Psoas muscle (tissue), 8 donors: ENCODE measurements at regions of chr1 and their contacts with region 1.

Region 1: GRCh38 chr1:214895011-214895600 is 187.4 kb upstream of the KCNK2 start:
- DNase-seq: no peak
- ATAC-seq: no peak
- H3K4me3 ChIP-seq: no peak overlapping the region
- H3K27ac ChIP-seq: no peak overlapping the region
- H3K4me1 ChIP-seq: no peaks in the 10 kb centered on the region
- H3K27me3 ChIP-seq: no peaks in the 10 kb centered on the region
- CTCF ChIP-seq: no peak

Region 2: DNA sequence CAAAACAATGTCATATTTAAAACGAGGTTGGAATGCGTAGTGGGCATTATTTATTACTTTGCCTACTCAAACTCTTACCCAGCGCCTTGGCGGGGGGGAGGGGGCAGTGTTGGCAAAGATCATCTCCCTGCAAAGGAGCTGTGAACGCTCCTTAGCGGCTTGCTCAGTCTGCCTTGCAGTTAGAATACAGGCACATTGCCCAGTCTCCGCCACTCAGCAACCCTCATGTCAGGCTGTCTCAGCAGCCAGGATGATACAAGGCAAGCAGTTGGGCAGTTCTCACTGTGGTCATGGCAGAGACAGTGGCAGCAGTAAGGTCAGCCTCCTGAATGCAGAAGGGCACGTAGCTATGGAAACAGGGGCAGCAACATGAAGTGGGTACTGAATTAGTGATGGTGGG is 17.0 kb after region 1 on chr1:
- intact Hi-C with region 1: loop called in 1 of 2 experiments (anchors 1 kb)
- DNase-seq: no peak
- ATAC-seq: no peak
- H3K4me3 ChIP-seq: no peak overlapping the region
- H3K27ac ChIP-seq: no peak overlapping the region
- H3K4me1 ChIP-seq: no peaks in the 10 kb centered on the region
- H3K27me3 ChIP-seq: no peaks in the 10 kb centered on the region
- CTCF ChIP-seq: no peak